Activated B cell treated with CpG ODN at 0.5 μM for 24 hours (primary cell): ENCODE measurements at regions of chr5 and their contacts with region 1.

Region 1: GRCh38 chr5:160439205-160439600 is 17.5 kb downstream of the PTTG1 start:
- DNase-seq: peak; percentile 86
- ATAC-seq: peak; percentile 77
- H3K4me3 Mint-ChIP-seq: peak overlapping the region; percentile 87
- H3K27ac Mint-ChIP-seq: peak overlapping the region; percentile 94
- H3K4me1 Mint-ChIP-seq: peaks cover 60% of the 10 kb centered on the region
- H3K27me3 Mint-ChIP-seq: no peaks in the 10 kb centered on the region
- CTCF ChIP-seq: peak; percentile 81

Region 2: GRCh38 chr5:160293901-160294561 is 145.2 kb before region 1 on chr5:
- CTCF ChIA-PET with region 1: no interaction called
- POLR2A ChIA-PET with region 1: no interaction called
- intact Hi-C with region 1: no loop called
- DNase-seq: no peak
- ATAC-seq: no peak
- H3K4me3 Mint-ChIP-seq: no peak overlapping the region
- H3K27ac Mint-ChIP-seq: no peak overlapping the region
- H3K4me1 Mint-ChIP-seq: no peaks in the 10 kb centered on the region
- H3K27me3 Mint-ChIP-seq: peaks cover 4% of the 10 kb centered on the region
- CTCF ChIP-seq: no peak

Region 3: GRCh38 chr5:160342403-160342941 is 96.7 kb before region 1 on chr5:
- CTCF ChIA-PET with region 1: no interaction called
- POLR2A ChIA-PET with region 1: no interaction called
- intact Hi-C with region 1: no loop called
- DNase-seq: no peak
- ATAC-seq: no peak
- H3K4me3 Mint-ChIP-seq: no peak overlapping the region
- H3K27ac Mint-ChIP-seq: no peak overlapping the region
- H3K4me1 Mint-ChIP-seq: no peaks in the 10 kb centered on the region
- H3K27me3 Mint-ChIP-seq: no peaks in the 10 kb centered on the region
- CTCF ChIP-seq: no peak

Region 4: DNA sequence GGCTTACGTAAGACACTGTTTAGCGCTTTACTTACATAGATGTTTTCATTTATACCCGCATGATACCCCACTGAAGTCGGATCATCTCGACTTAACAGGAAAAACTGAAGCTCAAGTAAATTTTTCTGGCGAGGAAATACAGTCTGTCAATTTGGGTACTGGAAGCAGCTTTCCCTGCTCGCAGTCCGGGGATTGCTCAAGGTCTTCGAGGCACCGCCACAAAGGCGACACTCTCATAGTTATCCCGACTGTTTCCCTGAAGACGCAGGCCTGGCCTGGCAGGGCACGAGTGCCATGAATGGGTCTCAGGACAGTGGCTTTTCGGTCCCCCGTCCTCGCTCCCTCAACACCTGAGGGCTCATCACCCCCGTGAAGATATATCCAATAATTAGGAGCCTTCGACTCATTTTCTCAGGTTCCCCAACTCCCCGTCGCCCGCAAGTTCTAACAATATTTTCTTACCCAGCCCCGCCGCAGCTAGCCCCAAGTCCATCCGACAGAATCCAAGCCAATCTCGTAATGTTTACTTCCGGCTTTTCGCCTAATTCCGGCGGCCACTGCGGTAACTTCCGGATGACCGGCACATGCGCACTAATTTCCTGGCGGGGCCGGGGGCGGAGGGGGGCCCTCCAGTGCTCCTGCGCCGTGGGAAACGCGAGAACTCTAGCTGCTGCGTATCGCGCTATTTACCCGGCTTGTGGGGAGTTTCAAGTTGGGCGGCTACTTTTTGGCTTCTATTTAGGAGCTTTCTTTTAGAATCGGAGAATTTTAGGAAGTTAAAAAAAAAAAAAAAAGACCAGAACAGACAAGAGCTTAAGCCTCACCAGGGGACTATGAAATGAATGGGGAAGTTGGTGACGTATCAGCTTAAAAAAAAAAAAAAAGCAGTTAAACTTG is 20.4 kb before region 1 on chr5 and contains the start of gene SLU7:
- CTCF ChIA-PET with region 1: interaction called, 33 read pairs
- POLR2A ChIA-PET with region 1: interaction called, 32 read pairs
- intact Hi-C with region 1: loop called (anchors 1 kb)
- DNase-seq: peak; percentile 88
- ATAC-seq: peak; percentile 81
- H3K4me3 Mint-ChIP-seq: peak within 1 kb of the TSS; percentile 91
- H3K27ac Mint-ChIP-seq: peak within 1 kb of the TSS; percentile 90
- H3K4me1 Mint-ChIP-seq: peaks cover 72% of the 10 kb centered on the region
- H3K27me3 Mint-ChIP-seq: no peaks in the 10 kb centered on the region
- CTCF ChIP-seq: no peak
- total RNA-seq, gene SLU7: 58.5 and 59.3 TPM in 2 replicates

Region 5: GRCh38 chr5:160458806-160459800 is 19.9 kb after region 1 on chr5:
- CTCF ChIA-PET with region 1: interaction called, 132 read pairs
- POLR2A ChIA-PET with region 1: interaction called, 20 read pairs
- intact Hi-C with region 1: loop called (anchors 1 kb)
- DNase-seq: no peak
- ATAC-seq: peak; percentile 78
- H3K4me3 Mint-ChIP-seq: peak overlapping the region; percentile 39
- H3K27ac Mint-ChIP-seq: peak overlapping the region; percentile 51
- H3K4me1 Mint-ChIP-seq: peaks cover 45% of the 10 kb centered on the region
- H3K27me3 Mint-ChIP-seq: peaks cover 1% of the 10 kb centered on the region
- CTCF ChIP-seq: no peak

Region 6: GRCh38 chr5:160486573-160486972 is 47.4 kb after region 1 on chr5:
- CTCF ChIA-PET with region 1: interaction called, 20 read pairs
- POLR2A ChIA-PET with region 1: interaction called, 13 read pairs
- intact Hi-C with region 1: loop called (anchors 1 kb)
- DNase-seq: no peak
- ATAC-seq: peak; percentile 81
- H3K4me3 Mint-ChIP-seq: peak overlapping the region; percentile 20
- H3K27ac Mint-ChIP-seq: peak overlapping the region; percentile 47
- H3K4me1 Mint-ChIP-seq: peaks cover 29% of the 10 kb centered on the region
- H3K27me3 Mint-ChIP-seq: no peaks in the 10 kb centered on the region
- CTCF ChIP-seq: no peak

Region 7: DNA sequence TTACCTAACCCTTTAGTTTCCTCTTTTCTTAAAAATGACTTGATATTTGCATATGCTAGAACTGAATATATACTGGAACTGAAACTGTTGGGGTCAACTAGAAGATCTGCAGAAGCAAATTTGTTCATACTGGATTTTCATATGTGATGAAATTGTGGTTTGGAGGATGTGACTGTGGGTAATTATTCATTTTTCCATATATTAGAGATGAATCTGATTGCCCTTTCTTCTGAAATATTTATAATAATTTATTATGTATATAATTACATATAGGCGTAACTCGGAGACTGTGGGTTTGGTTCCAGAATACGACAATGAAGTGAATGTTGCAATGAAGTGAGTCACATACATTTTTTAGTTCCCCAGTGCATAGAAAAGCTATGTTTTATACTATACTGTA is 263.7 kb after region 1 on chr5:
- CTCF ChIA-PET with region 1: no interaction called
- POLR2A ChIA-PET with region 1: no interaction called
- intact Hi-C with region 1: loop called (anchors 10 kb)
- DNase-seq: no peak
- ATAC-seq: peak; percentile 54
- H3K4me3 Mint-ChIP-seq: no peak overlapping the region
- H3K27ac Mint-ChIP-seq: no peak overlapping the region
- H3K4me1 Mint-ChIP-seq: peaks cover 5% of the 10 kb centered on the region
- H3K27me3 Mint-ChIP-seq: peaks cover 12% of the 10 kb centered on the region
- CTCF ChIP-seq: no peak

Region 8: DNA sequence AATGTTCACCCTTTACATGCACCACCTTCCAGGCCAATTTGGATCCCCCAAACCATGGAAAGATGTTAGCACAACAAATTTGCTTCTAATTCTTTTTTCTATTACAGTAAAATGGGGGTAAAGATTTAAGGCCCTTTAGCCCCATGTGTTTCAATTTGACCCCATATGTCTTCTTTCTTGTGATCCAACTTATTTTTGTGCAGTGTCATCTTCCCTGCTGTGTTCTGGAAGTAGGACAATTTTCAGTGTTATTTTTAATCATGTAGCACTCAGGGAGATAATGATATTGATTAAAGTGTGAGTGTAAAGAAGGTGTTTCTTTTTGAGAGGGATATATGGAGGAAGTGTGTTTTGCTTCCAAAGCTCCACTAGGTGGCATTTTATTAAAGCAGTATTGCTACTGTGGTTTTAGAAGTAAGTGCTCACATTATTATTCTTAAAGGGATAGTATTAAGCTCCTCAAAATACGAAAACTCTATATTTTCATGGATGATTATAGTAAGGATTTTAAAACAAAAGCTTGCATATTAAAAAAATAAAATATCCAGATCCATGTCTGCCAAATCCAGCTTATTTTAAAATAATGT is 531.5 kb after region 1 on chr5:
- CTCF ChIA-PET with region 1: no interaction called
- POLR2A ChIA-PET with region 1: no interaction called
- intact Hi-C with region 1: loop called (anchors 5 kb)
- DNase-seq: no peak
- ATAC-seq: no peak
- H3K4me3 Mint-ChIP-seq: no peak overlapping the region
- H3K27ac Mint-ChIP-seq: no peak overlapping the region
- H3K4me1 Mint-ChIP-seq: no peaks in the 10 kb centered on the region
- H3K27me3 Mint-ChIP-seq: peaks cover 4% of the 10 kb centered on the region
- CTCF ChIP-seq: no peak

Region 9: DNA sequence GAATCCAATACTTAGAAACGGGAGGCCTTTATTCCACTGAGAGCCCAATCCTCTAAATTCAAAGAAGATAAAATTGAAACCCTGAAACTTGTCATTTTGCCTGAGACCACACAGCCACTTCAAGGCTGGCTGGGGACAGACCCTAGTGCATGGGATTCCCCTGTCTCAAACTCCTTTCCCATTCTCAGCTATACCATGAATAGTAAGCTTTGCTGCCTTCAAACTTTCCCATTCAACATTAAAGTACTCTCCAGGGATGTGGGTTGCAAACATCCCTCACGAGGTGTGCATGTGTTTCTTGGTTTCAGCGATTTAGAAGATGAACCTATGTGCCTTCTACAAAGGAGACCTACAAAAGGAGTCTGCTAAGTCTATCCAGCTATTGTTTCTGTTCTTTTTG is 1042.7 kb after region 1 on chr5:
- CTCF ChIA-PET with region 1: no interaction called
- POLR2A ChIA-PET with region 1: no interaction called
- intact Hi-C with region 1: no loop called
- DNase-seq: no peak
- ATAC-seq: no peak
- H3K4me3 Mint-ChIP-seq: no peak overlapping the region
- H3K27ac Mint-ChIP-seq: no peak overlapping the region
- H3K4me1 Mint-ChIP-seq: no peaks in the 10 kb centered on the region
- H3K27me3 Mint-ChIP-seq: no peaks in the 10 kb centered on the region
- CTCF ChIP-seq: no peak